ENCODE measurements at regions of chr11 and their contacts with region 1.

Region 1: DNA sequence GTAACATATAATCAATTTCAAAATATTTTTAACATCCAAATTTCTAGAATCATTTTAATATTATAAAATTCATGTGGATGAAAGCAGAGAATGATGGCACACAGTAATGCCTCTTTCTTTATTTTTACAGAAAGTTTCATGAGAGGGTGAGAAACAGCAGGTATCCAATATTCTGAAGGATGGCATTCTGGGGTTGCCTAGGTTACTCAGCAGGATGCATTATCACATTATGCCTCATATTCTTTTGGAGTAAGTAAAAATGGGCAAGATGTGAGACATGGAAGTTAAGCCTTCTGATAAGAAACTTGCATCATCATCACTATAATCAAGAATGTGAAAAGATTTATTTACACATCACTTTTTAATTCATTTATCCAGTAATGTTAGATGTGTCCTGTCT is 148.7 kb upstream of the PGR start:
- DNase-seq: no peak
- ATAC-seq: no peak
- H3K4me3 ChIP-seq: no peak overlapping the region
- H3K4me3 Mint-ChIP-seq: no peak overlapping the region
- H3K27ac ChIP-seq: no peak overlapping the region
- H3K27ac Mint-ChIP-seq: no peak overlapping the region
- H3K4me1 ChIP-seq: no peaks in the 10 kb centered on the region
- H3K4me1 Mint-ChIP-seq: no peaks in the 10 kb centered on the region
- H3K27me3 ChIP-seq: no peaks in the 10 kb centered on the region
- H3K27me3 Mint-ChIP-seq: no peaks in the 10 kb centered on the region
- CTCF ChIP-seq: no peak

Region 2: GRCh38 chr11:101215069-101215468 is 63.2 kb before region 1 on chr11:
- CTCF ChIA-PET with region 1: no interaction called
- POLR2A ChIA-PET with region 1: no interaction called
- intact Hi-C with region 1: no loop called
- DNase-seq: no peak
- ATAC-seq: no peak
- H3K4me3 ChIP-seq: no peak overlapping the region
- H3K4me3 Mint-ChIP-seq: no peak overlapping the region
- H3K27ac ChIP-seq: no peak overlapping the region
- H3K27ac Mint-ChIP-seq: no peak overlapping the region
- H3K4me1 ChIP-seq: no peaks in the 10 kb centered on the region
- H3K4me1 Mint-ChIP-seq: no peaks in the 10 kb centered on the region
- H3K27me3 ChIP-seq: no peaks in the 10 kb centered on the region
- H3K27me3 Mint-ChIP-seq: no peaks in the 10 kb centered on the region
- CTCF ChIP-seq: no peak

Region 3: GRCh38 chr11:101323997-101324396 is 45.7 kb after region 1 on chr11:
- CTCF ChIA-PET with region 1: no interaction called
- POLR2A ChIA-PET with region 1: no interaction called
- intact Hi-C with region 1: no loop called
- DNase-seq: no peak
- ATAC-seq: no peak
- H3K4me3 ChIP-seq: no peak overlapping the region
- H3K4me3 Mint-ChIP-seq: no peak overlapping the region
- H3K27ac ChIP-seq: no peak overlapping the region
- H3K27ac Mint-ChIP-seq: no peak overlapping the region
- H3K4me1 ChIP-seq: no peaks in the 10 kb centered on the region
- H3K4me1 Mint-ChIP-seq: no peaks in the 10 kb centered on the region
- H3K27me3 ChIP-seq: no peaks in the 10 kb centered on the region
- H3K27me3 Mint-ChIP-seq: no peaks in the 10 kb centered on the region
- CTCF ChIP-seq: no peak

Region 4: DNA sequence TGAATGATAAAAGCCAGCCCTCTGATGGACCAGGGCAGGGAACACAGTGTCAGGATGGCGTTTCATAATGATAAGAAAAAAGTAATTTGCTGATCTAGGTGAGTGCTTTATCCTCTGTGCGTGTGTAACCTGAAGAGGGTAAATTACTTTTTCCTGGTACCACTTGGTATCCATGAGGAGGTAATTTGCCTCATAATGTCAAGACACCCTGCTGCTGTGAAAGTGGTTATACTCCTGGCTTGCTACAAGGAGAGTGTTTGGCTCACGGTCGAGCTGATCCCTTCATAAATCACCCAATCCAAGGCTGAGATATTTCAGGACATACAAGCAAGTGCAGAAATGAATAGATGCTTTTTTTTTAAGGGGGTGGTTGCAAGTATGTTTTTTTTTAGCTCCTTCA is 58.6 kb after region 1 on chr11:
- CTCF ChIA-PET with region 1: no interaction called
- POLR2A ChIA-PET with region 1: no interaction called
- intact Hi-C with region 1: loop called in 1 of 2 experiments (anchors 10 kb)
- DNase-seq: no peak
- ATAC-seq: no peak
- H3K4me3 ChIP-seq: no peak overlapping the region
- H3K4me3 Mint-ChIP-seq: no peak overlapping the region
- H3K27ac ChIP-seq: no peak overlapping the region
- H3K27ac Mint-ChIP-seq: no peak overlapping the region
- H3K4me1 ChIP-seq: no peaks in the 10 kb centered on the region
- H3K4me1 Mint-ChIP-seq: no peaks in the 10 kb centered on the region
- H3K27me3 ChIP-seq: no peaks in the 10 kb centered on the region
- H3K27me3 Mint-ChIP-seq: no peaks in the 10 kb centered on the region
- CTCF ChIP-seq: no peak

Measured in CD8-positive, alpha-beta T cell (primary cell).